ENCODE measurements at regions of chr20 and their contacts with region 1.

Region 1: GRCh38 chr20:50509935-50510705 is at the start of gene PTPN1:
- DNase-seq: peak; percentile 98 to 100 (median 99)
- ATAC-seq: peak; percentile 96
- H3K4me3 ChIP-seq: peak within 1 kb of the TSS; percentile 84
- H3K4me3 Mint-ChIP-seq: peak within 1 kb of the TSS; percentile 96
- H3K27ac ChIP-seq: peak within 1 kb of the TSS; percentile 81 to 87
- H3K27ac Mint-ChIP-seq: peak within 1 kb of the TSS; percentile 92
- H3K4me1 ChIP-seq: peaks cover 26% of the 10 kb centered on the region
- H3K4me1 Mint-ChIP-seq: peaks cover 58% of the 10 kb centered on the region
- H3K27me3 ChIP-seq: no peaks in the 10 kb centered on the region
- H3K27me3 Mint-ChIP-seq: no peaks in the 10 kb centered on the region
- CTCF ChIP-seq: no peak
- total RNA-seq, gene PTPN1: 82.3 to 82.8 TPM

Region 2: DNA sequence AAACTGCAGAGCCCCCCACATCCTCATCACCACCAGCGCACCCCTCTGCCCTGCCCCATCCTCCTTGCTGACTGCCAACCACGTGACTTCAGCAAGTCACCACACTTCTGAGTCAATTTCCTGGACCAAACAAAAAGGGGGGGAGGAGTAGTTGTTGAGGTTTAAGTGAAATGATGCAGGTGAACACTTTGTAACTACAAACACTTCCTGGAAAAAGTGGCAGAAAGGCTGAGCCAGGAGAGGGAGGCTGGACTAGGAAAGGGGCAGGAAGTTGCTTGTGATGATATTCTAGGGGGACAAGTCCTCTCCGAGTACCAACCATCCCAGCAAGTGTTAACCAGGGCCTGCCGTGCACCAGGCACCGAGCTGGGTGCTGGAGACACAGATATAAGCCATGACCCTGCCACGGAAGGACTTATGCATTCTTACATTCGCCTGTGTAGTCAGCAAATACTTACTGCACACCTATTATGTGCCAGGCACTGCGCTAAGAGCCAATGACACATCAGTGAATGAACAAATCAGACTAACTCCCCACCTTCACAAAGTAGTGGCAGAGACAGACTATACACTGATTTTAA is 1749.6 kb before region 1 on chr20:
- CTCF ChIA-PET with region 1: no interaction called
- POLR2A ChIA-PET with region 1: no interaction called
- intact Hi-C with region 1: loop called in 1 of 2 experiments (anchors 5 kb)
- DNase-seq: peak; percentile 39 to 95 (median 68)
- ATAC-seq: peak; percentile 82
- H3K4me3 ChIP-seq: peak overlapping the region; percentile 18
- H3K4me3 Mint-ChIP-seq: peak overlapping the region; percentile 46
- H3K27ac ChIP-seq: peak overlapping the region; percentile 68 to 86
- H3K27ac Mint-ChIP-seq: peak overlapping the region; percentile 92
- H3K4me1 ChIP-seq: peaks cover 82% of the 10 kb centered on the region
- H3K4me1 Mint-ChIP-seq: peaks cover 74% of the 10 kb centered on the region
- H3K27me3 ChIP-seq: no peaks in the 10 kb centered on the region
- H3K27me3 Mint-ChIP-seq: no peaks in the 10 kb centered on the region
- CTCF ChIP-seq: no peak

Region 3: GRCh38 chr20:49982346-49983122 is 527.6 kb before region 1 on chr20 and contains the start of gene SNAI1:
- CTCF ChIA-PET with region 1: interaction called, 3 read pairs
- POLR2A ChIA-PET with region 1: no interaction called
- intact Hi-C with region 1: loop called in 1 of 2 experiments (anchors 2 kb)
- DNase-seq: peak; percentile 68 to 94 (median 82)
- ATAC-seq: peak; percentile 91
- H3K4me3 ChIP-seq: peak within 1 kb of the TSS; percentile 48
- H3K4me3 Mint-ChIP-seq: peak within 1 kb of the TSS; percentile 72
- H3K27ac ChIP-seq: no peak within 1 kb of the TSS
- H3K27ac Mint-ChIP-seq: peak within 1 kb of the TSS; percentile 74
- H3K4me1 ChIP-seq: peaks cover 24% of the 10 kb centered on the region
- H3K4me1 Mint-ChIP-seq: peaks cover 15% of the 10 kb centered on the region
- H3K27me3 ChIP-seq: no peaks in the 10 kb centered on the region
- H3K27me3 Mint-ChIP-seq: no peaks in the 10 kb centered on the region
- CTCF ChIP-seq: peak; percentile 28
- total RNA-seq, gene SNAI1: 1.7 to 2.5 TPM

Region 4: GRCh38 chr20:50153485-50154377 is 356.4 kb before region 1 on chr20 and contains the start of gene PEDS1:
- CTCF ChIA-PET with region 1: no interaction called
- POLR2A ChIA-PET with region 1: interaction called, 6 read pairs
- intact Hi-C with region 1: loop called in 1 of 2 experiments (anchors 1 kb)
- DNase-seq: peak; percentile 59 to 93 (median 78)
- ATAC-seq: peak; percentile 95
- H3K4me3 ChIP-seq: peak within 1 kb of the TSS; percentile 96
- H3K4me3 Mint-ChIP-seq: peak within 1 kb of the TSS; percentile 94
- H3K27ac ChIP-seq: peak within 1 kb of the TSS; percentile 70 to 75
- H3K27ac Mint-ChIP-seq: peak within 1 kb of the TSS; percentile 99
- H3K4me1 ChIP-seq: peaks cover 51% of the 10 kb centered on the region
- H3K4me1 Mint-ChIP-seq: peaks cover 51% of the 10 kb centered on the region
- H3K27me3 ChIP-seq: no peaks in the 10 kb centered on the region
- H3K27me3 Mint-ChIP-seq: no peaks in the 10 kb centered on the region
- CTCF ChIP-seq: no peak
- total RNA-seq, gene PEDS1: 21.3 to 21.9 TPM

Region 5: DNA sequence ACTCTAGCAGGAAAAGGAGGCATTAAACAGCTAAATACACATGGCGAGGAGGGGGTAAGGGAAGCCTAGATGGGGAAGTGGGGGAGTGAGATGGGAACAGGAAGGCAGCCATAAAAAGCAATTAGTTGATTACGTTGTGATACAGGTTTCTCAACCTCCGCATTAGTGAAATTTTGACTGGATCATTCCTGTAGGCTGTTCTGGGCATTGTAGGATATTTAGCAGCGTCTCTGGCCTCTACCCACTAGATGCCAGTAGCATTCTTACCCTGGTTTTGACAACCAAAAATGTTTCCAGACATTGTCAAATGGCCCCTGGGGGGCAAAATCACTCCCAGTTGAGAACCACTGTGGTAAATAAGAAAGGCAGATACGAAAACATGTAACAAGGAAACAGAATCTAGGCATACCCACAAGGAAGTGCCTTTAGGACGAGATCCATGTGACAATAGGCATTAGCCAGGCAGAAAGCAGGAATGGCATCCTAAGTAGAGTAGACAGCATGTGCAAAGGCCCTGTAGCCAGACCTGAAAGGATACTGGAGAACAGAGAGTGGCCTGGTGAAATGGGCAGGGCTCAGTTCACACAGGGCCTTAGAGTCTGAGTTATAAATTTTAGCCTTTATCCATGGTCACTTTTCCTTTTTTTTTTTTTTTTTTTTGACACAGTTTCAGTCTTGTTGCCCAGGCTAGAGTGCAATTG is 25.7 kb before region 1 on chr20:
- CTCF ChIA-PET with region 1: interaction called, 3 read pairs
- POLR2A ChIA-PET with region 1: interaction called, 33 read pairs
- intact Hi-C with region 1: loop called (anchors 2 to 5 kb)
- DNase-seq: peak in 1 of 14 experiments; percentile 20
- ATAC-seq: no peak
- H3K4me3 ChIP-seq: peak overlapping the region; percentile 60
- H3K4me3 Mint-ChIP-seq: peak overlapping the region; percentile 91
- H3K27ac ChIP-seq: peak overlapping the region in 1 of 2 donors; percentile 82
- H3K27ac Mint-ChIP-seq: peak overlapping the region; percentile 89
- H3K4me1 ChIP-seq: peaks cover 14% of the 10 kb centered on the region
- H3K4me1 Mint-ChIP-seq: peaks cover 25% of the 10 kb centered on the region
- H3K27me3 ChIP-seq: no peaks in the 10 kb centered on the region
- H3K27me3 Mint-ChIP-seq: no peaks in the 10 kb centered on the region
- CTCF ChIP-seq: no peak

Region 6: GRCh38 chr20:50551288-50551687 is 41.2 kb after region 1 on chr20:
- CTCF ChIA-PET with region 1: interaction called, 4 read pairs
- POLR2A ChIA-PET with region 1: interaction called, 5 read pairs
- intact Hi-C with region 1: loop called in 1 of 2 experiments (anchors 5 kb)
- DNase-seq: peak in 1 of 14 experiments; percentile 39
- ATAC-seq: peak; percentile 75
- H3K4me3 ChIP-seq: no peak overlapping the region
- H3K4me3 Mint-ChIP-seq: peak overlapping the region; percentile 18
- H3K27ac ChIP-seq: no peak overlapping the region
- H3K27ac Mint-ChIP-seq: peak overlapping the region; percentile 43
- H3K4me1 ChIP-seq: peaks cover 38% of the 10 kb centered on the region
- H3K4me1 Mint-ChIP-seq: peaks cover 51% of the 10 kb centered on the region
- H3K27me3 ChIP-seq: no peaks in the 10 kb centered on the region
- H3K27me3 Mint-ChIP-seq: no peaks in the 10 kb centered on the region
- CTCF ChIP-seq: no peak

Region 7: GRCh38 chr20:50731055-50731871 is 221.1 kb after region 1 on chr20 and contains the start of gene PARD6B:
- CTCF ChIA-PET with region 1: no interaction called
- POLR2A ChIA-PET with region 1: no interaction called
- intact Hi-C with region 1: loop called in 1 of 2 experiments (anchors 2 kb)
- DNase-seq: peak; percentile 98 to 100 (median 99)
- ATAC-seq: peak; percentile 94
- H3K4me3 ChIP-seq: peak within 1 kb of the TSS; percentile 68
- H3K4me3 Mint-ChIP-seq: peak within 1 kb of the TSS; percentile 93
- H3K27ac ChIP-seq: peak within 1 kb of the TSS; percentile 44 to 52
- H3K27ac Mint-ChIP-seq: peak within 1 kb of the TSS; percentile 88
- H3K4me1 ChIP-seq: peaks cover 16% of the 10 kb centered on the region
- H3K4me1 Mint-ChIP-seq: peaks cover 41% of the 10 kb centered on the region
- H3K27me3 ChIP-seq: no peaks in the 10 kb centered on the region
- H3K27me3 Mint-ChIP-seq: no peaks in the 10 kb centered on the region
- CTCF ChIP-seq: no peak
- total RNA-seq, gene PARD6B: 5.6 to 8.2 TPM